ENCODE measurements at regions of chr3 and their contacts with region 1.

Region 1: DNA sequence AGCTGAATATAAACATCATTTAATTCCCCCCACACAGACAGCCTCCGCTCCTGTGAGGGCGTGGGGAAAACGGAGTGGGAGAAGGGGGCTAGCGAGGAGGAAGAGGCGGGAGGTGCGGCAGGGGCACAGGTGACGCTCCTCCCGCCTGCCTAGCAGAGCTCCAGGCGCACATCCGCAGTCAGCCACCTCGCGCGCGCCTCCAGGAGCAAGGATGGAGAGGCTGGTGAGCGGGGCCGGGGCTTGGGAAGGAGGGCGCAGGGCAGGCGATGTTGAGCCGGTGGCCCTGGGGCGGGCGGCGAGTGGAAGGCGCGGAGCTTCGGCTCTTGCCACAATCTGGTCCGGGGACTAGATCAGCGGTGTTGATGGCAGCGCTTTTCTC is at the start of gene CD200:
- DNase-seq: peak; percentile 88
- total RNA-seq, gene CD200: 7.7 to 17.7 TPM

Region 2: DNA sequence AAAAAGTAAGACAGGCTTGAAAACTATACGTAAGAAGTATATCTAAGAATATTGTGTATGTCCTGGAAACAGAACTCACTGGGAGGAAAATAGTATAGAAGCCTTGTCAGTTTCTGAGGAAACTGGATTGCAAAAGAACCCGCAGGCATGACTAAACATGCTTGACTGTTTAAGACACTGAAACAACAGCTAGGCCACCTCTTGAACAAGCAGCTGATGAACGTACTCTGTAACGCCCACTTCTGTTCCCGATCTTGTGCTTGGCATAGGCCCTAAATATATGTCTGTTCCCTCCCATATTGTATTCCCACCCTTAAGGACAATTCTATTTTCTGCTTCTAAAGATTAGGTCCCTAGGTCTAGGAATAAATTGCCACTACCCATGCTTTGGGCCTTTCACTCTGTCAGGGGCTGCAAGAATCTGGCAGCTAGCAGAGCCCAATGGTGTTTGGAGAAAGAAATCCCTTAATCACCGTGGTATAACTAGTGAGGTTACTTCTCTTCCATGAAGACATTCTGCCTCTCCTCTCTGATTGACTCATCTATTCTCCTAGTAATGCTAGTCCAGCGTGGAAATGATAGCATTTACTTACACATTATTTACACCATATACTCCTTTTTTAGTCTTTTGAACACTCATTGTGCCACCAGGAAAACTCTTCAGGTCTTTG is 46.2 kb after region 1 on chr3:
- intact Hi-C with region 1: loop called in 1 of 2 experiments (anchors 5 kb)
- DNase-seq: no peak

Measured in posterior vena cava (tissue), 2 donors.